IMR-90 (cell line): ENCODE measurements at regions of chr17 and their contacts with region 1.

Region 1: GRCh38 chr17:64306850-64307463 is 43.9 kb upstream of the TEX2 start:
- DNase-seq: peak; percentile 67
- ATAC-seq: peak; percentile 65
- H3K4me3 ChIP-seq: no peak overlapping the region
- H3K27ac ChIP-seq: no peak overlapping the region
- H3K4me1 ChIP-seq: no peaks in the 10 kb centered on the region
- H3K27me3 ChIP-seq: peaks cover 41% of the 10 kb centered on the region
- CTCF ChIP-seq: peak; percentile 82
- POLR2A ChIP-seq: no peak
- RAD21 ChIP-seq: peak; percentile 50

Region 2: GRCh38 chr17:64399071-64399766 is 92.3 kb after region 1 on chr17:
- CTCF ChIA-PET with region 1: no interaction called
- POLR2A ChIA-PET with region 1: no interaction called
- dilution Hi-C with region 1: loop called (anchors 10 kb)
- in situ Hi-C with region 1: no loop called
- intact Hi-C with region 1: no loop called
- DNase-seq: no peak
- ATAC-seq: no peak
- H3K4me3 ChIP-seq: no peak overlapping the region
- H3K27ac ChIP-seq: no peak overlapping the region
- H3K4me1 ChIP-seq: no peaks in the 10 kb centered on the region
- H3K27me3 ChIP-seq: peaks cover 1% of the 10 kb centered on the region; the same call in 1 of the 2 replicates
- CTCF ChIP-seq: no peak
- POLR2A ChIP-seq: no peak
- RAD21 ChIP-seq: no peak